GM18951 (cell line): ENCODE measurements at regions of chr5 and their contacts with region 1.

Region 1: DNA sequence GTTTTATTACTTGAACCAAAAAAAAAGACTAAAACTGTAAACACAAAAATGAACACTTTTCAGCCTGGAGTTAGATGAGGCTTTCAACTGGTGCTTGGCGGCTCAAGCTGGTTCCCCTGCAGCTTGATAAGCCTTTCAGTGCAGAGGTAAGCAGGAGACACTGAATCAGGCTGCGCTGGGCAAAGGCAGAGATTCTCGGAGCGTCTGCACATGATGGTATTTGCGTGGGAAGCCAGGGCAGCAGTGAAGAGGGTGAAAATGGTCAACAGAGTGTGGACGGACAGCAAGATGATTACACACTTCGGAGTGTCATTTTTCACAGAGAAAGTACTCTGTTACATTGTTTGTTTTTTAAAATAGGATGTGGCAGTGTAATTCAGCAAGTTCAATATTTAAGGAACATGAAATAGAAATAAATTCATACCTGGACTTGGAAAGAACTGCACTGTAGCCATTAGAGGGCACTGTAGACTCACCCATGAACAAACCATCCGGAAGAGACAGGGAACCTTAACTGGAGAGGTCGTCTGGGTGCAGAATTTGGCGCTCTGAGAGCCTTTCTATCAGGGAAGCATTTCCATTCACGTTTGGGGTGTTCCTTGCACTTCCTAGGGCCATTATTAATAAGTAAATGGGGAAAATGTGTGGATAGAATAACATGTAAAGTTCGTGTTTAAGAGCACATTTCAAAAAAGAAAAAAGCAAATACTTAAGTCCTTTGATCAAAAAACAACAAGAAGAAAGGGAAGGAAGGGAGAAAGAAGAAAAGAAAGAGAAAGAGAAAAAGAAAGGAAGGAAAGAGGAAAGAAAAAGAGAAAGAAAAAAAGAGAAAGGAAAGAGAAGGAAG is 69.8 kb downstream of the ICE1 start:
- POLR2A ChIP-seq: no peak

Region 2: GRCh38 chr5:5141625-5142532 is 350.4 kb before region 1 on chr5:
- in situ Hi-C with region 1: no loop called
- POLR2A ChIP-seq: no peak

Region 3: DNA sequence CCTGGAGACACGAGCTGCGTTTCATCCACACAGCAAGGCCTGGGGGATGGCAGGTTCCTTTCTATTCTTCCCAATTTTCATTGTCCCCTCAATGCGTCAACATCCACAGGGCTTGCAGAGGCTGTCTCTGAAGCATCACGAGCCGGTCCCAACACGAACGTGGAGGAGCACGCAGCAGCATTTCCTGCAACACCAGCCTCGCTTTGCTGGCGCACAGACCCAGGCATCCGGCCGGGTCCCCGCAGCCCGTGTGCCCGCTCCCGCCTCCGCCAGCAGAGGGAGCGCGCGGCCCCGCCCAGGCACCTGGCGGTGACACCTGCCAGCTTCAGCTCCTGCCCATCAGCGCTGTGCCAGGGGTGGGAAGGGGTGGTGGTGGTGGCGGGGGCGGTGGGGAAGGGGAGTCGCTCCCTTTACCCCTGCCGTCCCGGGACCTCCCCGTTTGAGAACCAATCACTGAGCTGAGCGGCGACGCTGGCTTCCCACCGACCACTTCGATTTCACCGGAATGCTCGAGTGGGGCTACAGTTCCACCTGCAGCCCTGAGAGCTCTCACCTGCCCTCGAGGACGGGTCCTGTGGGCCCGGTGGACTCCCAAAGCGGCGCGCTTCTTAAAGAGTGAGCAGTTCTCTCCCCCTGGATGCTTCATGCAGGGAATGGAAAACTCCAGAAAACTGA is 394.6 kb after region 1 on chr5:
- in situ Hi-C with region 1: loop called (anchors 25 kb)
- POLR2A ChIP-seq: no peak

Region 4: GRCh38 chr5:6745706-6746222 is 1253.5 kb after region 1 on chr5:
- in situ Hi-C with region 1: loop called (anchors 25 kb)
- POLR2A ChIP-seq: no peak